ENCODE measurements at regions of chr11 and their contacts with region 1.

Region 1: DNA sequence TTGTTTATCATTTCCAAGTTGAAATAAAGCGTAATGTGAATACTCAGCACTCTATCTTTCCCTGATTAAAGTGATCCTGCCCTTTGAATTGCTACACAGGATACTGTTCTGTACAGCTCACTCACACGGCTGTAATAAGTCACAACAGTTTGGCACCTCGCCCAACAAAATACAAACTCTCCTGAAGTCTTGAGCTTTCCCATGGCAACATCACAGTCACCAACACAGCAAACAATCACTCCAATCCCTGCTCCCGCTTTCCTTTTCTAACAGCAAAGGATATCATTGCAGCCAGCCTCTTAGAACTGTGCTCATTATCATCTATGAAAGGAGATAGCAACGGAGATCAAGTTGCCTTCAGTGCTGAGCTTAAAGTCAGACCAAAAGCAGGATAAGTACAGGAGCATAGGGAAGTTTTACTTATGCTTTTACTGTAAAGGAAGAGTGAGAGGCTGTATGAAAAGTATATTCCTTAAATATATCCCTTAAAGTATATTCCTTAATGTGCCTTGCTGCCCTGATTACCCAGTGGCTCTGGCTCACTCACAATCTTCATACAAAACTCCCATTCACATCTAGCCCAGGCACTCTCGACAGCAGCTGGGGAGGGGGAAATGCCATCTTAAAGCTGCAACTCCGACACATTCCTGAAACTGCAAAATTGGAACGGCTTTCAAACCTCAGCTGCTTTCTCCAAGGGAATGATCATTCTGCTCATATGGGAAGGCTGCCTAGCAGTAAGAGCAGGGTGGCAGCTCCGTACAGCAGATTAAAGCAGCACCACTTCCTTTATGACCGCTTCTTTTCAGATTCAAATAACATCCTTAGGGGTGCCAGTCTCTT is 35.8 kb downstream of the MAML2 start:
- DNase-seq: peak; percentile 58 to 98
- H3K4me3 ChIP-seq: peak overlapping the region; percentile 41 to 60
- H3K27ac ChIP-seq: peak overlapping the region; percentile 66 to 81
- H3K4me1 ChIP-seq: peaks cover 16 to 56% of the 10 kb centered on the region in 2 donors
- H3K27me3 ChIP-seq: no peaks in the 10 kb centered on the region
- CTCF ChIP-seq: no peak

Region 2: GRCh38 chr11:96242971-96243647 is 64.0 kb before region 1 on chr11:
- intact Hi-C with region 1: loop called (anchors 2 kb)
- DNase-seq: peak; percentile 88 to 97
- H3K4me3 ChIP-seq: peak overlapping the region; percentile 59 to 61
- H3K27ac ChIP-seq: peak overlapping the region; percentile 87 to 90
- H3K4me1 ChIP-seq: peaks cover 0 to 23% of the 10 kb centered on the region in 2 donors
- H3K27me3 ChIP-seq: no peaks in the 10 kb centered on the region
- CTCF ChIP-seq: no peak

Region 3: GRCh38 chr11:96263361-96263763 is 43.8 kb before region 1 on chr11:
- intact Hi-C with region 1: loop called (anchors 5 kb)
- DNase-seq: no peak
- H3K4me3 ChIP-seq: no peak overlapping the region
- H3K27ac ChIP-seq: peak overlapping the region; percentile 75 to 82
- H3K4me1 ChIP-seq: peaks cover 16 to 52% of the 10 kb centered on the region in 2 donors
- H3K27me3 ChIP-seq: no peaks in the 10 kb centered on the region
- CTCF ChIP-seq: peak in 1 of 3 experiments; percentile 9

Region 4: GRCh38 chr11:96324960-96325359 is 17.8 kb after region 1 on chr11:
- intact Hi-C with region 1: loop called (anchors 2 kb)
- DNase-seq: no peak
- H3K4me3 ChIP-seq: peak overlapping the region in 1 of 2 donors; percentile 12
- H3K27ac ChIP-seq: peak overlapping the region; percentile 75 to 81
- H3K4me1 ChIP-seq: peaks cover 0 to 32% of the 10 kb centered on the region in 2 donors
- H3K27me3 ChIP-seq: no peaks in the 10 kb centered on the region
- CTCF ChIP-seq: no peak